Prostate gland (tissue), 2 donors: ENCODE measurements at regions of chr10 and their contacts with region 1.

Region 1: GRCh38 chr10:110311357-110311949 is 6.7 kb upstream of the SMNDC1 start:
- DNase-seq: no peak
- H3K4me3 ChIP-seq: no peak overlapping the region
- H3K27ac ChIP-seq: no peak overlapping the region
- H3K4me1 ChIP-seq: no peaks in the 10 kb centered on the region
- H3K27me3 ChIP-seq: no peaks in the 10 kb centered on the region
- CTCF ChIP-seq: peak in 3 of 4 experiments; percentile 62 to 70 (median 65)
- POLR2A ChIP-seq: no peak

Region 2: GRCh38 chr10:110269374-110270318 is 41.8 kb before region 1 on chr10:
- intact Hi-C with region 1: no loop called
- DNase-seq: peak; percentile 12
- H3K4me3 ChIP-seq: peak overlapping the region in 1 of 2 donors; percentile 24
- H3K27ac ChIP-seq: peak overlapping the region; percentile 71 to 75
- H3K4me1 ChIP-seq: no peaks in the 10 kb centered on the region
- H3K27me3 ChIP-seq: no peaks in the 10 kb centered on the region
- CTCF ChIP-seq: no peak
- POLR2A ChIP-seq: no peak

Region 3: GRCh38 chr10:110460111-110460809 is 148.8 kb after region 1 on chr10:
- intact Hi-C with region 1: no loop called
- DNase-seq: no peak
- H3K4me3 ChIP-seq: no peak overlapping the region
- H3K27ac ChIP-seq: no peak overlapping the region
- H3K4me1 ChIP-seq: no peaks in the 10 kb centered on the region
- H3K27me3 ChIP-seq: no peaks in the 10 kb centered on the region
- CTCF ChIP-seq: no peak
- POLR2A ChIP-seq: no peak

Region 4: DNA sequence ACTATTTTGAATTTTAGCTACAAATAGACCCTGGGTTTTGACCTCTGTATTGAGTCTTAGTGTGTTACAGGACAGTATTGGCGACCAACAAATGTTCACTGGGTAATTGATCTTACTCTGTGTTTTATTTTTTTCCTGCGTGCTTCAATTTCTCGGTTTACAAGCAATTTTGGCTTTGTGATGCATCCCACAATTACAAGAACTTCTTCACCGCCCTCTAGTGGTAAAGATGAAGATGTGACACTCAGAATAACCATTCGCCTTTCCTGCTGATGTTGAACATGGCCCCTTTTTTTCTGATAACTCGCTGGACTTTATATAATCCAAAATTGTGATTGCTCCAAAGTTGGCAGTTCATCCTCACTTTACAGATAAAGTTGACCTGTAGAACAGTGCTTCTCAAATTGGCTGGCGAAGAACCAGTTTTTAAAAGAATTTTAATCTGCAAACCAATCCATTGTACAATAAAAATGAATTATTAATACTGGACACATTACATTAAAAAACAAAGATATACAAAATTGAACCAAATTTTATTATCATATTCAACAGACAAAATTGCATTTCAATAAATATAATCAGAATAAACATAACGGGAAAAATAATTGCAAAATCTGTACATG is 235.8 kb after region 1 on chr10:
- intact Hi-C with region 1: loop called (anchors 1 kb)
- DNase-seq: no peak
- H3K4me3 ChIP-seq: no peak overlapping the region
- H3K27ac ChIP-seq: no peak overlapping the region
- H3K4me1 ChIP-seq: no peaks in the 10 kb centered on the region
- H3K27me3 ChIP-seq: no peaks in the 10 kb centered on the region
- CTCF ChIP-seq: peak; percentile 33 to 78 (median 78)
- POLR2A ChIP-seq: no peak